GM13977 (cell line): ENCODE measurements at regions of chr2 and their contacts with region 1.

Region 1: DNA sequence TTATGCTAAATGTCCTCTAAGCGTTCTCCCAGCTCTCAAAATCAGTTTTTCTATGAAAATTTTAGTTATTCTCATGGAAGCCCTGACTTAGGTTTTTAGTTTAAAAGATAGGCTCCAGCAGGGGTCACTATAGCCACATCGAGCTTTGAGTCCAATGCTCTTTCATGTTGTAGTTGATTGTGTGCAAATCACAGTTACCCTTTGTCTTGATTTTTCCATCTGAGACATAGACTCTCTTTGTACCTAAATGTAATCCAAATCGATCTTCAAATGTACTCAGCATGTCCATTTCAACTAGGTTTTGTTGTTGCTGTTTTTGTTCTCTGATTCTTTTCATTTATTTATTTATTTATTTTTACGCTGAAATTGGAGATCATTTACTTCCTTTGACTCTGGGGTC is 26.4 kb upstream of the MSTN start:
- DNase-seq: peak; percentile 39
- CTCF ChIP-seq: peak; percentile 59

Region 2: DNA sequence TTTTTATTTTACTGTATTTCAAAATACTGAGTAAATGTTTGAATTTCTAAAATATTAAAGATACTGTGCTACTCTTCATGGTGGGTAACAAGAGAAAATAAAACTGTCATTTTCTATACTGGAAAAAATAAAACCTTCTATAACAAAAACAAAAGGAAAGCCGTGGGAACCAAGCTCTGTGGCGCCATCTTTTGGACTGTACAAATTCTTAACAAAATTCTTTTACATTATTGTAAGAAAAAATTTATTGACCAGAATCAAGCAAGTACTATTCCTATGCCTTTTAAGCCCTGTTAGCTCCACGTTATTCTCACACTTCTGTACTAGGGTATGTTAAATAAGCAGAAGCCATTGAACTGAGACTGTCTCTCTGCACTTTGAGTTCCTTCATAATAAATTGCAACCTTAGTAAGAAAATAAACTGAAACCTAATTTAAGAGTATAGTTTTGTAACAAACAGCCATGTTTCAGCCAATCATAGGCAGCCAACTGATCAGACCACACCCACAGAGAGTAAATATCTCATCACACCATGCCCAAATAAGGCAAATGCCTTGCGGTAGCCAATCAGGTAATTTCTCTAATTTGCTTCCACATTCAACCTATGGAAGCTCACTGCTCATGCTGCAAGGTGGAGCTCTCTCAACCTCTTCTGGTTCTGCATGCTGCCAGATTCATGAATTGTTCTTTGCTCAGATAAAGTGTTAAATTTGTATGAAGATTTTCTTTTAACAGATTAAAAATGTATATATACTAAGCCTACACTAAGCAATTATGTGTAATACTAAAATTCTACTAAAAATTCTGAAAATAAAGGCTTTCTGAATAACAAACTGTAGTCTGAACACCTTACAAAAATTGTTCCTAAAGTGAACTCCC is 188.6 kb after region 1 on chr2:
- in situ Hi-C with region 1: loop called (anchors 25 kb)
- DNase-seq: no peak
- CTCF ChIP-seq: peak; percentile 51

Region 3: GRCh38 chr2:190382851-190383250 is 293.9 kb after region 1 on chr2:
- in situ Hi-C with region 1: loop called (anchors 10 kb)
- DNase-seq: peak; percentile 77
- CTCF ChIP-seq: peak; percentile 69

Region 4: GRCh38 chr2:190511104-190511503 is 422.2 kb after region 1 on chr2:
- in situ Hi-C with region 1: loop called (anchors 10 kb)
- DNase-seq: no peak
- CTCF ChIP-seq: peak; percentile 37

Region 5: GRCh38 chr2:190804182-190804795 is 715.4 kb after region 1 on chr2:
- in situ Hi-C with region 1: loop called (anchors 10 kb)
- DNase-seq: no peak
- CTCF ChIP-seq: peak; percentile 40